ENCODE measurements at regions of chr5 and their contacts with region 1.

Region 1: GRCh38 chr5:21646469-21646868 is 1206.7 kb downstream of the CDH12 start:
- DNase-seq: no peak
- H3K4me3 Mint-ChIP-seq: no peak overlapping the region
- H3K27ac Mint-ChIP-seq: no peak overlapping the region
- H3K4me1 Mint-ChIP-seq: peaks cover 17% of the 10 kb centered on the region
- H3K27me3 Mint-ChIP-seq: no peaks in the 10 kb centered on the region
- CTCF ChIP-seq: no peak

Region 2: GRCh38 chr5:21397693-21398092 is 248.8 kb before region 1 on chr5:
- CTCF ChIA-PET with region 1: no interaction called
- intact Hi-C with region 1: no loop called
- DNase-seq: no peak
- H3K4me3 Mint-ChIP-seq: no peak overlapping the region
- H3K27ac Mint-ChIP-seq: no peak overlapping the region
- H3K4me1 Mint-ChIP-seq: no peaks in the 10 kb centered on the region
- H3K27me3 Mint-ChIP-seq: no peaks in the 10 kb centered on the region
- CTCF ChIP-seq: no peak

Region 3: DNA sequence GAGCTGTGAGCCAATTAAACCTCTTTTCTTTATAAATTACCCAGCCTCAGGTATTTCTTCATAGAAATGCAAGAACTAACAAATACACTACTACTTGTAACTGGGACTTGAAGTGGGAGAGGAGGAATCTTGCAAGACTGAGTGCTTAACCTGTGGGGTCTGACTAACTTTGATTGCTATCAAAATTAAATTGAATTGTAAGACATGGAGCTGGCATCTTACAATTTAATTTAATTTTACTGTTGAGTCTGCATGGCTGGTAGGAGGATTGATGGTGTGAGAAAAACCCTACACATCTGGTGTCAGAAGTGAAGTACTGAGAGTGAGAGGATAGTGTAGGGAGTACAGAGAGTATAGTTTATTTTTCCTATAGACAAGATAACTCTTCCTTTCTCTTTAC is 53.2 kb before region 1 on chr5:
- CTCF ChIA-PET with region 1: no interaction called
- intact Hi-C with region 1: no loop called
- DNase-seq: no peak
- H3K4me3 Mint-ChIP-seq: no peak overlapping the region
- H3K27ac Mint-ChIP-seq: no peak overlapping the region
- H3K4me1 Mint-ChIP-seq: no peaks in the 10 kb centered on the region
- H3K27me3 Mint-ChIP-seq: no peaks in the 10 kb centered on the region
- CTCF ChIP-seq: no peak

Region 4: GRCh38 chr5:21603796-21604195 is 42.7 kb before region 1 on chr5:
- CTCF ChIA-PET with region 1: no interaction called
- intact Hi-C with region 1: no loop called
- DNase-seq: no peak
- H3K4me3 Mint-ChIP-seq: no peak overlapping the region
- H3K27ac Mint-ChIP-seq: no peak overlapping the region
- H3K4me1 Mint-ChIP-seq: no peaks in the 10 kb centered on the region
- H3K27me3 Mint-ChIP-seq: no peaks in the 10 kb centered on the region
- CTCF ChIP-seq: no peak

Region 5: DNA sequence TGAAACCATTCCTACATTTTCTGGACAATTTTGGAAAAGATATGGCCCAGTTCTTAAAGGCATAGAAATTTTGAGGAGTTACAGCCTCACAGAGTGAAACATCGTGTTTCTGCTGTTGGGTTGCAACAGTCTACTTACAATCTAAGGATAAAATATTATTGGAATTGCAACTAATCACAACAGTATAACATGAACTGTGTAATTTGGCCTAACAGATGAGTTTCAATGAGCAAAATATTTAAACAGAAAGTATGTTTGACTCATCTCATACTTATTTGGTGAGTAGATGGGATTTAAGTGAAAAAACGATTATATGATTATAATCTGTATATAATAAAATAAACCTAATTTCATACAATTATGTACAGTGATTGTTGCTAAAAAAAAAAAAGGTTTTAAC is 144.8 kb after region 1 on chr5:
- CTCF ChIA-PET with region 1: no interaction called
- intact Hi-C with region 1: loop called (anchors 10 kb)
- DNase-seq: no peak
- H3K4me3 Mint-ChIP-seq: no peak overlapping the region
- H3K27ac Mint-ChIP-seq: no peak overlapping the region
- H3K4me1 Mint-ChIP-seq: no peaks in the 10 kb centered on the region
- H3K27me3 Mint-ChIP-seq: no peaks in the 10 kb centered on the region
- CTCF ChIP-seq: no peak